ENCODE measurements at regions of chr4 and their contacts with region 1.

Region 1: GRCh38 chr4:85459736-85460135 is 15.2 kb upstream of the ARHGAP24 start:
- DNase-seq: no peak
- H3K4me3 ChIP-seq: no peak overlapping the region
- H3K27ac ChIP-seq: no peak overlapping the region
- H3K4me1 ChIP-seq: no peaks in the 10 kb centered on the region
- CTCF ChIP-seq: no peak

Region 2: GRCh38 chr4:85448869-85449626 is 10.7 kb before region 1 on chr4:
- CTCF ChIA-PET with region 1: no interaction called
- POLR2A ChIA-PET with region 1: interaction called, 17 read pairs
- intact Hi-C with region 1: no loop called
- DNase-seq: peak; percentile 49
- H3K4me3 ChIP-seq: no peak overlapping the region
- H3K27ac ChIP-seq: peak overlapping the region; percentile 28
- H3K4me1 ChIP-seq: peaks cover 16% of the 10 kb centered on the region
- CTCF ChIP-seq: no peak